CD4-positive, alpha-beta memory T cell (primary cell): ENCODE measurements at regions of chr6 and their contacts with region 1.

Region 1: GRCh38 chr6:143940011-143940597 is 68.0 kb downstream of the PLAGL1 start:
- DNase-seq: peak; percentile 55 to 66 (median 58)
- H3K4me3 ChIP-seq: no peak overlapping the region
- H3K4me3 Mint-ChIP-seq: no peak overlapping the region
- H3K27ac ChIP-seq: no peak overlapping the region
- H3K27ac Mint-ChIP-seq: no peak overlapping the region
- H3K4me1 ChIP-seq: no peaks in the 10 kb centered on the region
- H3K4me1 Mint-ChIP-seq: peaks cover 4 to 7% (median 6%) of the 10 kb centered on the region in 4 donors
- H3K27me3 ChIP-seq: no peaks in the 10 kb centered on the region
- H3K27me3 Mint-ChIP-seq: peaks cover 4 to 5% of the 10 kb centered on the region in 2 donors

Region 2: DNA sequence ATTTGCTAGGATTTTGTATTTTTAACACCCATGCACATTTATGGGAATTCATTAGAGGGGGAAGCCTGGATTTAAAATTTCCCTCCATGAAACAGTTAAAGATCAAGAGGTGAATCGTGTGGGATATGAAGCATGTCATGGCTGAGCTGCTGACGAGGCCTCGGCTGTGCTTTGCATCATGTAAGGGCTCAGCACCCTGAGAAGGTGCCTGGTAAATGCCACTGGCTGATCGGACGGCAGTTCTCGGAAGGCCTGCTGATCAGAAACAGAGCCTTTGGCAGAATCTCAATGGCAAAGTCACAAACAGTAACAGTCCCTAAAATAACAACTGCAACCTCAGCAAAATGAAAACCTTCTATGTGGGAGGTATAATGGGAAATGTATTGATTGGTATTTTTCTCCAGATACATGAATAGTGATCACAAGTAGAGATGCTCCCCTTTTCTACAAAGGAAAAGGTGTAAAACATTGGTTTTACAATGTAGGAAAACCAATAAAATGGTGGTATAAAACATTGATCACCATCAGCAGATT is 375.6 kb before region 1 on chr6:
- CTCF ChIA-PET with region 1: no interaction called
- POLR2A ChIA-PET with region 1: no interaction called
- intact Hi-C with region 1: no loop called
- DNase-seq: no peak
- H3K4me3 ChIP-seq: no peak overlapping the region
- H3K4me3 Mint-ChIP-seq: peak overlapping the region in 1 of 8 donors; percentile 16
- H3K27ac ChIP-seq: no peak overlapping the region
- H3K27ac Mint-ChIP-seq: no peak overlapping the region
- H3K4me1 ChIP-seq: peaks cover 39% of the 10 kb centered on the region
- H3K4me1 Mint-ChIP-seq: peaks cover 39 to 68% (median 51%) of the 10 kb centered on the region in 4 donors
- H3K27me3 ChIP-seq: no peaks in the 10 kb centered on the region
- H3K27me3 Mint-ChIP-seq: no peaks in the 10 kb centered on the region

Region 3: DNA sequence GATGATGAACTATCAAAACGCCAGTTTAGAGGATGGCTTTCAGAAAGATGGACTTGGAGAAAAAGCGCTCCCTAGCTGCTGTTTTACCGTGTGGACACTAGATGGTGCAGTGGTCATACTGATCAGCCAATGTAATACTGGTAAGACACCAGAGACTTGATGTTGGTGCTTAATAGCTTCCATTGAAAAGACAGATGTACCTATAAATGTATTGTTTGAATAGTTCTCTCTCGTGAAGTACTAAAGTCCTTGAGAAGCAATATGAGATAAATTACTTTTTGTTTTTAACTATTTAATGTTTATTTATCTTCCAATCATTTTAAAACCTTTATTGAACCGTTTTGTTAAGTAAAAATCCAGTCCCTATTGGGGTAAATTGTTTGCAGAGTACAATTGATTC is 364.7 kb before region 1 on chr6:
- CTCF ChIA-PET with region 1: interaction called, 66 read pairs
- POLR2A ChIA-PET with region 1: no interaction called
- intact Hi-C with region 1: loop called (anchors 1 kb)
- DNase-seq: peak; percentile 54 to 72 (median 68)
- H3K4me3 ChIP-seq: no peak overlapping the region
- H3K4me3 Mint-ChIP-seq: no peak overlapping the region
- H3K27ac ChIP-seq: no peak overlapping the region
- H3K27ac Mint-ChIP-seq: peak overlapping the region in 4 of 7 donors; percentile 22 to 43 (median 32)
- H3K4me1 ChIP-seq: no peaks in the 10 kb centered on the region
- H3K4me1 Mint-ChIP-seq: peaks cover 11 to 35% (median 19%) of the 10 kb centered on the region in 4 donors
- H3K27me3 ChIP-seq: no peaks in the 10 kb centered on the region
- H3K27me3 Mint-ChIP-seq: no peaks in the 10 kb centered on the region

Region 4: GRCh38 chr6:143958839-143959399 is 18.8 kb after region 1 on chr6:
- CTCF ChIA-PET with region 1: interaction called, 11 read pairs
- POLR2A ChIA-PET with region 1: no interaction called
- intact Hi-C with region 1: no loop called
- DNase-seq: no peak
- H3K4me3 ChIP-seq: no peak overlapping the region
- H3K4me3 Mint-ChIP-seq: no peak overlapping the region
- H3K27ac ChIP-seq: no peak overlapping the region
- H3K27ac Mint-ChIP-seq: no peak overlapping the region
- H3K4me1 ChIP-seq: no peaks in the 10 kb centered on the region
- H3K4me1 Mint-ChIP-seq: no peaks in the 10 kb centered on the region
- H3K27me3 ChIP-seq: no peaks in the 10 kb centered on the region
- H3K27me3 Mint-ChIP-seq: no peaks in the 10 kb centered on the region

Region 5: DNA sequence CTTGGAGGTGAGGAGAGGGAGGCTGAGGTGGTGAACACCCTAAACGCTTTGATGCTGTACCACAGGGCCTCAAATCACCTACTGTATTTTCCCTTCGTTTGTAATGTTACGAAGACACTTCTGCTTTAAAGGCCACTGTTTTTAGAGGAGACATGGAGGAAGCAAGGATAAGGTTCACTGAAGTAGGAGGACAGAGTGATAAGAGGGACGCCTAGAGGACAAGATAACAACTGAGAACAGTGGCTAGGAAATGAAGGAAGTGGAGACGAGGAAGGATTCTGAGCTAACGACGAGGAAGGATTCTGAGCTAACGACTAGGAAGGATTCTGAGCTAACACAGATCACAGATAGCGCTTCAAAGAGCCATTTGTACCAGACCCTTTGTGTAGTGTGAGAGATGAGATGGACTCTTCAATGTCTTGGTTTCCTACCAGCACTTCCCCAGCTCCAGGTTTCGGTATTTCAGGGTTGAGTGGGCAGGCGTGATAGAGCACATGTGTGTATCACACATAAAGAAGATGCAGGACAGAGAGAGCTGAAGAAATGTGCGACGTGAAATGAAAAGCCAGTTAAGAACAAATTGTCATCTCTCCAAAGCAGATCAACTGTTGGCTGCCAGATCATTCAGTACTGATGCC is 147.8 kb after region 1 on chr6:
- CTCF ChIA-PET with region 1: interaction called, 13 read pairs
- POLR2A ChIA-PET with region 1: no interaction called
- intact Hi-C with region 1: no loop called
- DNase-seq: no peak
- H3K4me3 ChIP-seq: no peak overlapping the region
- H3K4me3 Mint-ChIP-seq: no peak overlapping the region
- H3K27ac ChIP-seq: no peak overlapping the region
- H3K27ac Mint-ChIP-seq: no peak overlapping the region
- H3K4me1 ChIP-seq: no peaks in the 10 kb centered on the region
- H3K4me1 Mint-ChIP-seq: no peaks in the 10 kb centered on the region
- H3K27me3 ChIP-seq: no peaks in the 10 kb centered on the region
- H3K27me3 Mint-ChIP-seq: no peaks in the 10 kb centered on the region

Region 6: GRCh38 chr6:145214570-145214969 is 1274.5 kb after region 1 on chr6:
- CTCF ChIA-PET with region 1: no interaction called
- POLR2A ChIA-PET with region 1: no interaction called
- intact Hi-C with region 1: loop called (anchors 5 kb)
- DNase-seq: peak in 4 of 5 donors; percentile 5 to 22 (median 14)
- H3K4me3 ChIP-seq: no peak overlapping the region
- H3K4me3 Mint-ChIP-seq: peak overlapping the region in 1 of 8 donors; percentile 27
- H3K27ac ChIP-seq: no peak overlapping the region
- H3K27ac Mint-ChIP-seq: no peak overlapping the region
- H3K4me1 ChIP-seq: no peaks in the 10 kb centered on the region
- H3K4me1 Mint-ChIP-seq: peaks cover 5 to 9% (median 8%) of the 10 kb centered on the region in 4 donors
- H3K27me3 ChIP-seq: no peaks in the 10 kb centered on the region
- H3K27me3 Mint-ChIP-seq: peaks cover 0 to 2% of the 10 kb centered on the region in 2 donors